ENCODE measurements at regions of chr7 and their contacts with region 1.

Region 1: GRCh38 chr7:118183786-118184564 is at the start of gene LSM8:
- DNase-seq: peak; percentile 98
- H3K4me3 ChIP-seq: peak within 1 kb of the TSS; percentile 98
- H3K27ac ChIP-seq: peak within 1 kb of the TSS; percentile 72
- H3K4me1 ChIP-seq: peaks cover 35% of the 10 kb centered on the region
- CTCF ChIP-seq: no peak
- total RNA-seq, gene LSM8: 105 and 159 TPM in 2 replicates

Region 2: DNA sequence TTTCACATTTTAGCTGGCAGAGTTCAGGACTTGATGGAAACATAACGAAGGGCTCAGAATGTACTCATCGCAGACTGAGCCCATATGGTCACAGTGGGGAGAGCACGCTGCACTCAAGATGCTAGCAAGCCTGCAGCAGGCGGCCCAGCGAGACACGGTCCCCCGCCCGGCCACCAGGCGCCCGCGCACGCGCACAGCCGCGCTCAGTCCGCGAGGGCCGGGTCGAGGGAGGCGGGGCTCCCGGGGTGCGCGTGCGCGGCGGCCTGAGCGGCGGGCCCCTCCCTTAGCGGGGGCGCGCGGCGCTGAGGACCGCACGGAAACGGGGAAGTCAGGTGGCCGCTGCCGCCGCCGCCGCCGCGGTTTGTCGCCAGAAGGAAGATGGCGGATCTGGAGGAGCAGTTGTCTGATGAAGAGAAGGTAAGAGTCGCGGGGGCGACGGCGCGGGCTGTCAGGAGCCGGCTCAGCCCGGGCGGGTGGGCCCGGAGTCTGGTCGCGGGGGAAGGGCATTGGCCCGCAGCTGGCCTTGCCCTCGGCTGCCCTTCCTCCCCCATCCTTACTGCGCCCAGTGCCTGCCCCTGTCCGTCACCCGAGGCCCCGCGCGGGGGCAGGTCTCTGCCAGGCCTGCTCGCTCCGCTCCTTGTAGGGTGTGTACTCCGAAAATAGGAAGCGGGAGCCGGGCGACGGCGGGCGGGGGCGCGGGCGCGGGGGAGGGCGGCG is 1321.6 kb before region 1 on chr7 and contains the start of gene CAPZA2:
- CTCF ChIA-PET with region 1: no interaction called
- POLR2A ChIA-PET with region 1: no interaction called
- intact Hi-C with region 1: loop called (anchors 10 kb)
- DNase-seq: peak; percentile 94
- H3K4me3 ChIP-seq: peak within 1 kb of the TSS; percentile 99
- H3K27ac ChIP-seq: peak within 1 kb of the TSS; percentile 58
- H3K4me1 ChIP-seq: peaks cover 11% of the 10 kb centered on the region
- CTCF ChIP-seq: 0 out of 2 replicates have a peak, but pooled peaks have one; percentile 9
- total RNA-seq, gene CAPZA2: 42.1 and 53.3 TPM in 2 replicates

Region 3: GRCh38 chr7:118109607-118110006 is 74.4 kb before region 1 on chr7:
- CTCF ChIA-PET with region 1: no interaction called
- POLR2A ChIA-PET with region 1: interaction called, 10 read pairs
- intact Hi-C with region 1: no loop called
- DNase-seq: no peak
- H3K4me3 ChIP-seq: no peak overlapping the region
- H3K27ac ChIP-seq: no peak overlapping the region
- H3K4me1 ChIP-seq: no peaks in the 10 kb centered on the region
- CTCF ChIP-seq: no peak

Region 4: DNA sequence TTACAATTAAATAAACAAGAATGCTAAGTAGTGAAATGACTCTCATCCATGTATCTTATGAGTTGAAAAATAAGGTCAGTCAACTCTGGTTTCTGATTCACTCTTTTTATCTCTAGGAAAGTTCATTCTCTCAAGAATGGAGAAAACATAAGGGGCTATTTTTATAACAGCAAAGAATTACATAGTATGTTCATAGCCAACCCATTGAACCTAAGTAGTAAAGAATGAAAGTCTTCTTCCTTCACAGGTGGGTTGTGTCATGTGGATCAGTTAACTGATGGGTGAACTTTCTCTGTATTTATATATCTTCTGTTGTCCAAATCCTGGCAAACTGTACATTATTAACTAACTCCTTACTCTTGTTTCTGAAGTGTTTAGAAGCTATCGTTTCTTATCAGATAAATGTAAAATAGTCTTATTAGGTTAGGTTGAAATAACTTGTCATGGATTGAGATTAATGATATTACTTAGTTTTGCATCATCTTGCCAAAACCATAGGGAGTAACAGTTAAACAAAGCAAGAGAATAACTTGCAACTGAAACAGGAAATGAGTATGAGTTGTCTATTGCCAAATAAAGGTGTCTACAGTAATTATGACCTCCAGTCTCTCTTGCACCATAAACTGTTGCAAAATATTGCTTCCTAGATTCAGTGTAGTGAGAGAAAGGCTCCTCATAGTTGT is 127.3 kb after region 1 on chr7:
- CTCF ChIA-PET with region 1: no interaction called
- POLR2A ChIA-PET with region 1: no interaction called
- intact Hi-C with region 1: loop called (anchors 10 kb)
- DNase-seq: peak; percentile 34
- H3K4me3 ChIP-seq: no peak overlapping the region
- H3K27ac ChIP-seq: peak overlapping the region; percentile 49
- H3K4me1 ChIP-seq: peaks cover 12% of the 10 kb centered on the region
- CTCF ChIP-seq: no peak

Measured in OCI-LY7 (cell line).